WTC11 (cell line): ENCODE measurements at regions of chr15 and their contacts with region 1.

Region 1: DNA sequence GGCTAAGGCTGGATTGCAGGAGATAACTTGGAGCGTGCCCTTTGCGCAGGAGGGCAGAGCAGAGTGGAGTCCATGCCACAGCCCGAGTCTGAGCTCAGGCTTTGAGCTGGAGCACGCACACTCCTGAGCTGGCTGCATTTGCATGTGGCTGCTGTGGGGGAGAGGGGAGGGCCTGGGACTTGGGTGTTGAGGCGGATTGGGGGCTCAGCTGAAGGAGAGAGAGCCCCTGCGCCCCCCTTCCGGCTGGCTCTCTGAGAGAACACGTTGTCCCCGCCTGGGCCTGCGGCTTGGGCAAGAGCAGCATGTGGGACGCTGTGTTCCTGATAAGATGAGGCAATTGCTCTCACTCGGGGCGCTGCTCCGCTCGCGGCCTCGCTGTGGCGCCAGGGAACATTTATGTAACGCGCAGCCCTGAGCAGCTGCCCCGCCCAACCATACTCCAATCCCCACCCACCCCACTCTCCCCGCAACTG is 39.1 kb downstream of the KLF13 start:
- DNase-seq: peak; percentile 78
- ATAC-seq: peak; percentile 78
- H3K4me3 Mint-ChIP-seq: peak overlapping the region; percentile 41
- H3K27ac Mint-ChIP-seq: no peak overlapping the region
- H3K4me1 Mint-ChIP-seq: peaks cover 92% of the 10 kb centered on the region
- H3K27me3 Mint-ChIP-seq: no peaks in the 10 kb centered on the region
- CTCF ChIP-seq: no peak

Region 2: DNA sequence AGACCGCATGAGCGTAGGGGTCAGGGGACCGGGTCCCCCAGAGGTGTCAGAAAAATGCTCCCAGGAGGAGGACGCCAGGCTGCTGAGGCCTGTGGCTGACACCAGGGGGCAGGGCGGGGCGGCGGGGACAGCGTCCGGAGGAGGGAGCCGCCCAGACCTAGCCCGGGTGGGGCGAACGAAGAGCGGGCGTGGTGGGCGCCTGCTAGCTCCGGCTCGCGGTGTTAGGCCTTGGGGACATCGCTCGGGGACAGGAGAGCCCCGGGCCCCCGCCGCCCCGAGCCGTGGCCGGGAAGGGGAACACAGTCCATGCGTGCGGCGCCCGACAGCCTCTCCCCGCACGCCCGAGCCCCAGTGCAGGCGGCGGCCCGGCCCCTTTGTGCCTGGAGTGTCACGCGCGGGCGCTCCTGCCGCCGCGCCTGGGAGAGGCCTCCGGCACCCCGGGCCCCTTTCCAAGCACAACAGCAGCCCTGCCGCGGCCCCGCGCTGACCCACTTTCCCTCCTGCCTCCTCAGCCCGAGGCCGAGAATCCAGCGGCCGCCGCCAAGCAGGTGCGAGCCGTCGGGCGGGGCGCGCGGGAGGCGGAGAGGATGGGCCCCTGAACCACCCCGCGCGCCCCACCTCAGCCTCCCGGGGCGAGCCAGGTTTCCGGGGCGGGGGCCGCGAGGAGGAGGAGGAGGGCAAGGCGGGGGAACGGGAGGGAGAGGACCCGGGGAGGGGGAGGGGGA is 150.0 kb before region 1 on chr15:
- CTCF ChIA-PET with region 1: interaction called, 11 read pairs
- POLR2A ChIA-PET with region 1: no interaction called
- DNase-seq: peak; percentile 87
- ATAC-seq: peak; percentile 76
- H3K4me3 Mint-ChIP-seq: peak overlapping the region; percentile 58
- H3K27ac Mint-ChIP-seq: no peak overlapping the region
- H3K4me1 Mint-ChIP-seq: peaks cover 12% of the 10 kb centered on the region
- H3K27me3 Mint-ChIP-seq: peaks cover 6% of the 10 kb centered on the region
- CTCF ChIP-seq: peak; percentile 69

Region 3: GRCh38 chr15:31302778-31303725 is 62.6 kb before region 1 on chr15:
- CTCF ChIA-PET with region 1: interaction called, 13 read pairs
- POLR2A ChIA-PET with region 1: no interaction called
- DNase-seq: peak; percentile 48
- ATAC-seq: peak; percentile 23
- H3K4me3 Mint-ChIP-seq: no peak overlapping the region
- H3K27ac Mint-ChIP-seq: no peak overlapping the region
- H3K4me1 Mint-ChIP-seq: peaks cover 51% of the 10 kb centered on the region
- H3K27me3 Mint-ChIP-seq: peaks cover 5% of the 10 kb centered on the region
- CTCF ChIP-seq: no peak

Region 4: GRCh38 chr15:31326156-31326732 is 39.4 kb before region 1 on chr15:
- CTCF ChIA-PET with region 1: interaction called, 11 read pairs
- POLR2A ChIA-PET with region 1: interaction called, 3 read pairs
- DNase-seq: peak; percentile 99
- ATAC-seq: peak; percentile 85
- H3K4me3 Mint-ChIP-seq: peak overlapping the region; percentile 78
- H3K27ac Mint-ChIP-seq: no peak overlapping the region
- H3K4me1 Mint-ChIP-seq: peaks cover 39% of the 10 kb centered on the region
- H3K27me3 Mint-ChIP-seq: peaks cover 17% of the 10 kb centered on the region
- CTCF ChIP-seq: no peak

Region 5: DNA sequence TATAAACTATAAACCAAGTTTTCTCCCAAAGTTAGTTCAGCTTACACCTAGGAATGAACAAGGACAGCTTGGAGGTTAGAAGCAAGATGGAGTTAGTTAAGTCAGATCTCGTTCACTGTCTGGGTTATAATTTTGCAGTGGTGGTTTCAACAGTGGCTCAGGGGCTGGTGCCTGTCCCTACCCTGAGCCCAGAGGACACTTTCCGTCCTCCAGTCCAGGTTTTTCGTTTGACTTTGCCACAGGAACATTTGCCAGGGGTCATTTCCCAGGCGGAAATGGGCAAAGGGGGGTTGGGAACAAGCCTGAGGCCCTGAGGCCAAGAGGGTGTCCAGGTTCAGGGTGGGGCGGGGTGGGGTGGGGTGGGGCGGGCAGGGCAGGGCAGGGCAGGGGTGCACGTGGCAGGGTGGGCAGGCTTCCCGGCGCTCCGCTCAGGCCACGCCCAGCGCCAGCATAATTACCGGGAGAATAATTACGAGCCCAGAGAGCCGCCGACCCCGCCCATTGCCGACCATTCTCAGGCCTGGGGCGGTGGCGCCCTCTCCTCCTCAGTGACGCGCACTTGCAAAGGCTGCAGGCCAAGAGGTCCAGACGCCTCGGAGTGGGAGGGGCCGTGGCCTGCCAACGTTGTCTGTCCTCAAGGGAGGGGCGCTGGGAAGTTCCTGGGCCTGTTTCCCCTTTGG is 31.3 kb after region 1 on chr15:
- CTCF ChIA-PET with region 1: interaction called, 13 read pairs
- POLR2A ChIA-PET with region 1: no interaction called
- DNase-seq: peak; percentile 96
- ATAC-seq: peak; percentile 89
- H3K4me3 Mint-ChIP-seq: peak overlapping the region; percentile 31
- H3K27ac Mint-ChIP-seq: peak overlapping the region; percentile 93
- H3K4me1 Mint-ChIP-seq: peaks cover 33% of the 10 kb centered on the region
- H3K27me3 Mint-ChIP-seq: peaks cover 23% of the 10 kb centered on the region
- CTCF ChIP-seq: no peak